ENCODE measurements at regions of chr20 and their contacts with region 1.

Region 1: GRCh38 chr20:10667077-10667401 is 6.8 kb downstream of the JAG1 start:
- DNase-seq: no peak
- H3K4me3 ChIP-seq: peak overlapping the region; percentile 3 to 94 (median 74)
- H3K27ac ChIP-seq: peak overlapping the region; percentile 83 to 100 (median 98)
- H3K4me1 ChIP-seq: peaks cover 37 to 98% (median 76%) of the 10 kb centered on the region in 3 donors
- H3K27me3 ChIP-seq: no peaks in the 10 kb centered on the region
- CTCF ChIP-seq: no peak
- POLR2A ChIP-seq: no peak

Region 2: GRCh38 chr20:10476319-10476724 is 190.7 kb before region 1 on chr20:
- intact Hi-C with region 1: no loop called
- DNase-seq: no peak
- H3K4me3 ChIP-seq: no peak overlapping the region
- H3K27ac ChIP-seq: no peak overlapping the region
- H3K4me1 ChIP-seq: peaks cover 6 to 21% (median 7%) of the 10 kb centered on the region in 3 donors
- H3K27me3 ChIP-seq: no peaks in the 10 kb centered on the region
- CTCF ChIP-seq: no peak
- POLR2A ChIP-seq: no peak

Region 3: GRCh38 chr20:10553326-10553984 is 113.6 kb before region 1 on chr20:
- intact Hi-C with region 1: loop called (anchors 10 kb)
- DNase-seq: no peak
- H3K4me3 ChIP-seq: no peak overlapping the region
- H3K27ac ChIP-seq: peak overlapping the region in 2 of 4 donors; percentile 4 to 53
- H3K4me1 ChIP-seq: peaks cover 18 to 74% (median 40%) of the 10 kb centered on the region in 3 donors
- H3K27me3 ChIP-seq: no peaks in the 10 kb centered on the region
- CTCF ChIP-seq: peak; percentile 62 to 92 (median 84)
- POLR2A ChIP-seq: no peak

Region 4: GRCh38 chr20:10596726-10597125 is 70.3 kb before region 1 on chr20:
- intact Hi-C with region 1: loop called (anchors 10 kb)
- DNase-seq: no peak
- H3K4me3 ChIP-seq: no peak overlapping the region
- H3K27ac ChIP-seq: peak overlapping the region; percentile 75 to 93 (median 90)
- H3K4me1 ChIP-seq: peaks cover 41 to 86% (median 57%) of the 10 kb centered on the region in 3 donors
- H3K27me3 ChIP-seq: no peaks in the 10 kb centered on the region
- CTCF ChIP-seq: no peak
- POLR2A ChIP-seq: no peak

Measured in esophagus squamous epithelium (tissue), 5 donors.